Gastrocnemius medialis (tissue), 4 donors: ENCODE measurements at regions of chr10 and their contacts with region 1.

Region 1: GRCh38 chr10:101060036-101060950 is 1.5 kb upstream of the KAZALD1 start:
- DNase-seq: peak; percentile 83 to 92
- ATAC-seq: peak; percentile 84 to 85
- H3K4me3 ChIP-seq: peak overlapping the region; percentile 79 to 94 (median 88)
- H3K27ac ChIP-seq: peak overlapping the region; percentile 93 to 99 (median 98)
- H3K4me1 ChIP-seq: peaks cover 30 to 34% of the 10 kb centered on the region in 2 donors
- H3K27me3 ChIP-seq: peaks cover 0 to 4% (median 0%) of the 10 kb centered on the region in 3 donors
- CTCF ChIP-seq: peak; percentile 75 to 93 (median 85)
- POLR2A ChIP-seq: no peak

Region 2: GRCh38 chr10:100912605-100913469 is 147.5 kb before region 1 on chr10 and contains the start of gene SLF2:
- in situ Hi-C with region 1: no loop called
- intact Hi-C with region 1: loop called (anchors 5 kb)
- DNase-seq: peak; percentile 98 to 99
- ATAC-seq: peak; percentile 98 to 99
- H3K4me3 ChIP-seq: peak within 1 kb of the TSS; percentile 99 to 100 (median 100)
- H3K27ac ChIP-seq: peak within 1 kb of the TSS; percentile 96 to 99 (median 97)
- H3K4me1 ChIP-seq: peaks cover 31 to 33% of the 10 kb centered on the region in 2 donors
- H3K27me3 ChIP-seq: no peaks in the 10 kb centered on the region
- CTCF ChIP-seq: no peak
- POLR2A ChIP-seq: peak; percentile 92 to 93
- total RNA-seq, gene SLF2: 9.2 to 23.0 (median 20.1) TPM

Region 3: GRCh38 chr10:100998991-100999741 is 61.1 kb before region 1 on chr10:
- in situ Hi-C with region 1: no loop called
- intact Hi-C with region 1: loop called (anchors 2 kb)
- DNase-seq: peak; percentile 61 to 78
- ATAC-seq: peak; percentile 58 to 59
- H3K4me3 ChIP-seq: peak overlapping the region; percentile 65 to 97 (median 86)
- H3K27ac ChIP-seq: peak overlapping the region; percentile 95 to 100 (median 98)
- H3K4me1 ChIP-seq: peaks cover 31 to 49% of the 10 kb centered on the region in 2 donors
- H3K27me3 ChIP-seq: no peaks in the 10 kb centered on the region
- CTCF ChIP-seq: peak; percentile 90 to 100 (median 99)
- POLR2A ChIP-seq: peak; percentile 92 to 95

Region 4: GRCh38 chr10:101042667-101043355 is 17.5 kb before region 1 on chr10:
- in situ Hi-C with region 1: no loop called
- intact Hi-C with region 1: loop called (anchors 2 kb)
- DNase-seq: peak; percentile 89 to 94
- ATAC-seq: peak; percentile 88 to 91
- H3K4me3 ChIP-seq: peak overlapping the region; percentile 61 to 75 (median 64)
- H3K27ac ChIP-seq: peak overlapping the region; percentile 74 to 84 (median 79)
- H3K4me1 ChIP-seq: peaks cover 11 to 16% of the 10 kb centered on the region in 2 donors
- H3K27me3 ChIP-seq: peaks cover 7 to 12% (median 9%) of the 10 kb centered on the region in 3 donors
- CTCF ChIP-seq: no peak
- POLR2A ChIP-seq: peak; percentile 46 to 59